Activated B cell treated with CpG ODN at 0.5 μM for 24 hours (primary cell): ENCODE measurements at regions of chr10 and their contacts with region 1.

Region 1: DNA sequence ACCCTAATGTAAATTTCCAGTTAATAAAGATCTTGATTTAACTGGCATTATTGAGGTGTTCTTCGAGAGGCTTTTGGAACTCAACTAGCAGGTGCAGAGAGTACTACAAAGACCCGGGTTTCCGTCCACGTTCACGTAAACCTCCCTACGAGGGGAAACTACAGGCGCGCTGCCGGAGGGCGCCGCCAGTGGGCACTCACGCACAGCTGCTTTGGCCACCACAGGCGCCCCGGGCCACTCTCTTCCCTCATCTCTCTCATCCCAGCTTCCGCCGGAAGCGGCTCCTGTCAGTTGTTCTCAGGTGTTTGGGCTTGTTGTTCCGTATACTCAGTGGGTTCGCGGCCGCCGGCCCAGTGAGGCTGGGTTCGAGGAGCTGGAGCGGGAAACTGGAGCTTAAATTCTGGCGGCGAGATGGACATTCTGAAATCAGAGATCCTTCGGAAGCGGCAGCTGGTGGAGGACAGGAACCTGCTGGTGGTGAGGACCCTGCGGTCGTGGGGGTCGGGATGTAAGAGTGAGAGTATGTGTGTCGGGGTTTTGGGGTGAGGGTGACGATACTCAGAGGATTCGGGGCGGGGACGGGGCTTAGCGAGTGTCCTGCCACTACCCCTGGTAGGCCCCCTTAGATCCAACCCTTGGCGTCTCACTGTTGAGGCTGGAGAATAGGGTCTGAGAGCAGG is at the start of gene PRPF18:
- DNase-seq: peak; percentile 93
- ATAC-seq: peak; percentile 100
- H3K4me3 Mint-ChIP-seq: peak within 1 kb of the TSS; percentile 100
- H3K27ac Mint-ChIP-seq: peak within 1 kb of the TSS; percentile 98
- H3K4me1 Mint-ChIP-seq: peaks cover 29% of the 10 kb centered on the region
- H3K27me3 Mint-ChIP-seq: peaks cover 19% of the 10 kb centered on the region
- CTCF ChIP-seq: peak; percentile 80
- total RNA-seq, gene PRPF18: 20.7 and 26.1 TPM in 2 replicates

Region 2: DNA sequence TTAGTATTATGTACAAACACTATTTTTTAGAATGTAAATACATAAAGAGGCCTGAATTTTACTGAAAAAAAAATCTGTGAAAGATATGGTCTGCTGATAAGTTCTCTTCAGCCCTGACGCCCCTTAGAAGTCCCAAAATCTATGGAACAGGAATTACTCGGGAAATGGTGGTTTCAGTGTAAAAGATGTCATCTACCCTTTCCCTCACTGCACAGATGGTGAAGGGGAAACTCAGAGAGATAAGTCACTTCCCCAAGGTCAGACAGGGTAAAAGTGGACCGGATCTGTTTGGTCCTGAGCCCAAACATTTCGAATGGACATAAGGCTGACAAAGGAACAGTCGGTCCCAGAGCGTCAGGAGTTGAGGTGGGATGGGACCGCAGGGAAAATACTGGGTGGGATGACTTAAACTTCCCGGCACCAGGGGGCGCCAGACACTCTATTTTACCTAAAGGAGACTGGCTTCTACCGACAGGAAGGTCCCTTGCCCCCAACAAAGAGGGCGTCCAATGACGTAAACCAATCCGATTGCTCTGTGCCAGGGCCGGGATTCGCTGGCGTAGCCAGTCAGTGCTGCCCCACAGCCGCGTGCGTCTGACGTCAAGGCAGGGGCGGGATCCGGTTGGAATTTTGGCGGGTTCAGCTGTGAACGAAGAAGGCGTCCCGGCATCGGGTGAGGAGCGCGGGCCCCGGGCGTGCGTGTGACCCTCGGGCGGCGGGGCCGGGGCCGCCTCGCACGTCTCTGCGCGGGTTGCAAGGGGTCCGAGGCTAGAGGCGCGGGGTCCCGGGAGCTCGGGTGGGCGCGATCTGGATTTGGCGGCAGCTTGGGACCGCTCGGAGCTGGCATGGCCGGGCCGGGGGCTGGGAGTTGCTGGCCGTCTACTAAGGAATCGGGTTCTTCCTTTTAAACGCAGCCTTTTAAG is 425.6 kb before region 1 on chr10 and contains the start of gene MCM10:
- CTCF ChIA-PET with region 1: no interaction called
- POLR2A ChIA-PET with region 1: no interaction called
- intact Hi-C with region 1: loop called (anchors 1 kb)
- DNase-seq: peak; percentile 88
- ATAC-seq: peak; percentile 100
- H3K4me3 Mint-ChIP-seq: peak within 1 kb of the TSS; percentile 89
- H3K27ac Mint-ChIP-seq: peak within 1 kb of the TSS; percentile 43
- H3K4me1 Mint-ChIP-seq: peaks cover 14% of the 10 kb centered on the region
- H3K27me3 Mint-ChIP-seq: no peaks in the 10 kb centered on the region
- CTCF ChIP-seq: peak; percentile 77
- total RNA-seq, gene MCM10: 3.7 and 4.6 TPM in 2 replicates

Region 3: GRCh38 chr10:13348216-13349017 is 238.4 kb before region 1 on chr10 and contains the start of gene SEPHS1:
- CTCF ChIA-PET with region 1: no interaction called
- POLR2A ChIA-PET with region 1: no interaction called
- intact Hi-C with region 1: loop called (anchors 1 kb)
- DNase-seq: peak; percentile 65
- ATAC-seq: peak; percentile 66
- H3K4me3 Mint-ChIP-seq: peak within 1 kb of the TSS; percentile 89
- H3K27ac Mint-ChIP-seq: peak within 1 kb of the TSS; percentile 88
- H3K4me1 Mint-ChIP-seq: peaks cover 59% of the 10 kb centered on the region
- H3K27me3 Mint-ChIP-seq: peaks cover 8% of the 10 kb centered on the region
- CTCF ChIP-seq: no peak
- total RNA-seq, gene SEPHS1: 36.7 and 38.0 TPM in 2 replicates

Region 4: GRCh38 chr10:13371897-13372470 is 214.8 kb before region 1 on chr10:
- CTCF ChIA-PET with region 1: interaction called, 4 read pairs
- POLR2A ChIA-PET with region 1: no interaction called
- intact Hi-C with region 1: loop called (anchors 1 kb)
- DNase-seq: peak; percentile 33
- ATAC-seq: peak; percentile 97
- H3K4me3 Mint-ChIP-seq: no peak overlapping the region
- H3K27ac Mint-ChIP-seq: no peak overlapping the region
- H3K4me1 Mint-ChIP-seq: no peaks in the 10 kb centered on the region
- H3K27me3 Mint-ChIP-seq: peaks cover 2% of the 10 kb centered on the region
- CTCF ChIP-seq: peak; percentile 77

Region 5: DNA sequence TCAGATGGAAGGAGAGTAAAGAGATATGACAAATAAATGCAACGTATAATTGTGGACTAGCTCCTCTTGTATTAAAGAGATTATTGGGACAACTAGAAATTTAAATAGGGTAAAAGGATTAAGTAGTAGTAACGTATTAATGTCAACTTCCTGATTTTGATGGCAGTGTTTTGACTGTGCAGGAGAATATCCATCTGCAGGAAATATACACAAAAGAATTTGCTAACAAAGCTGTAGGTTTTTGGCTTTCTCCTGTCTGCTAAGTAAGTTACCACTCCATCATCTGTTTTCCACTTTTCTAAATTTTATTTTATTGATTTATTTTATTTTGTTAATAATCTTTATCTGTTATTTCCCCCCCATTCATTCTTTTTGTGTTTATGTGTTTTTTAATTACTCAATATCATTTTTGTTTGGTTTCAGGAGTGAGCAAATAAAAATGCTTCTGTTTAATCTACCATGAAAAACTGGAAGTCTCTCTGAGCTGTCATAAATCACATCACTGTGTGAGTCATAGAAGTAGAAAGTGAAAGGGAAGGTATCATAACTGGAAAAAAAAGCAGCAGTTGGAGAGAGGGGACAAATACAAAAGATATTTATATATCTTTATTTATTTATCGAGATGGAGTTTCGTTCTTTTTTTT is 30.0 kb before region 1 on chr10:
- CTCF ChIA-PET with region 1: no interaction called
- POLR2A ChIA-PET with region 1: no interaction called
- intact Hi-C with region 1: loop called (anchors 2 kb)
- DNase-seq: no peak
- ATAC-seq: no peak
- H3K4me3 Mint-ChIP-seq: no peak overlapping the region
- H3K27ac Mint-ChIP-seq: peak overlapping the region; percentile 2
- H3K4me1 Mint-ChIP-seq: peaks cover 2% of the 10 kb centered on the region
- H3K27me3 Mint-ChIP-seq: peaks cover 6% of the 10 kb centered on the region
- CTCF ChIP-seq: no peak

Region 6: DNA sequence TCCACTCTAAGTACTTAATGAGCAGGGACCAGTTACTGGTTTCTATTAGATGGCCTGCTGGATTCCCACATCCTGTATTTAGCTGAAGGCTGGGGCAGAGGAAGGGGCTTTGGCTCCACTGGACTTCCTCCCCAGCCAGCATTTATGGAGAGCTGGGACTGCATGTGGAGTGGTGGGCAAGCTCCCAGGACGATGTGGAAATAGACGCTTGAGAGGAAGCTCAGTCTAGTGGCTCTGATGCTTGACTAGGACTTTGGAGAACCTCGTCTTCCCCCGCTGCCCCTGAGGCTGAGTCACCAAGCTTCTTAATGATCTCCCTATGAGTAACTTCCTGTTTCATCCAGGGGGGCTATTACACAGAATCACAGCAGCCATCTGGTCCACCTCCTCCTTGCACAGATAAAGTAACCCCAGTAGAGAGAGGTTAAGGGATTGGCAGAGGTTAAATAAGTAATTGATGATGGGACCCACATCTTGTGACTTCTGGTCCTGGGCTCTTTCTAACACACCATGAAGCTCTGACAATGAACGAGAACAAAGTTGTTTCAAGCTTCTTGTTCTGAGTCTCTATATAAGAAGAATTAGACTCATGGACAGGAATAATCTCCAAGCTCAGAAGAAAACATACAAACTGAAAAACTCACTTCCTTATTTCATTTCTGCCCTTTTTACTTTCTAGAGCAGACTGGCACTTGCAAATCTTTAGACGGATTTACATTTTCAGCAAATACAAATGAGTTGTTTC is 126.2 kb after region 1 on chr10:
- CTCF ChIA-PET with region 1: no interaction called
- POLR2A ChIA-PET with region 1: no interaction called
- intact Hi-C with region 1: loop called (anchors 1 kb)
- DNase-seq: peak; percentile 47
- ATAC-seq: peak; percentile 90
- H3K4me3 Mint-ChIP-seq: peak overlapping the region; percentile 72
- H3K27ac Mint-ChIP-seq: peak overlapping the region; percentile 97
- H3K4me1 Mint-ChIP-seq: peaks cover 28% of the 10 kb centered on the region
- H3K27me3 Mint-ChIP-seq: no peaks in the 10 kb centered on the region
- CTCF ChIP-seq: no peak